ENCODE measurements at regions of chr21 and their contacts with region 1.

Region 1: DNA sequence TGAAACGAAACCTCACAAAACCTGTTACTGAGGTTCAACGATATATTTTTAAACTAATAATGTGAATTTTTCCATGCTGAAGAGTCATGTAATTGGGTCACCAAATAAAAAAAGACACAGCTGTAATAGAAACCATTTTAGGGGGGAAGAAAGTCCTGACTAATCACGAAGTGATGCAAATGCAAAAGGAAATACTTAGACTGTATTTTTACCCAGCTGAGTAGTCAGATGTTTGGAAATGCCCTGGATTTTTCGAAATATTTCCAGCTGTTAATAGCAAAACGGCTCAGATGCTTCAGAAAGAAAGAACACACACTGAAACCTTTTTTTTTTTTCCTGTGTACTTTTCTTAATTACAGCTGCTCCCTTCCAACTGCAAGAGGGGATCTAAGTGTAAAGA is 210.3 kb downstream of the SETD4 start:
- DNase-seq: no peak
- H3K4me3 Mint-ChIP-seq: no peak overlapping the region
- H3K27ac Mint-ChIP-seq: no peak overlapping the region
- H3K4me1 Mint-ChIP-seq: no peaks in the 10 kb centered on the region
- H3K27me3 Mint-ChIP-seq: peaks cover 45% of the 10 kb centered on the region
- CTCF ChIP-seq: no peak

Region 2: GRCh38 chr21:34967509-34968289 is 882.3 kb before region 1 on chr21:
- CTCF ChIA-PET with region 1: no interaction called
- intact Hi-C with region 1: loop called (anchors 5 kb)
- DNase-seq: peak; percentile 31
- H3K4me3 Mint-ChIP-seq: no peak overlapping the region
- H3K27ac Mint-ChIP-seq: peak overlapping the region; percentile 33
- H3K4me1 Mint-ChIP-seq: peaks cover 28% of the 10 kb centered on the region
- H3K27me3 Mint-ChIP-seq: no peaks in the 10 kb centered on the region
- CTCF ChIP-seq: no peak

Measured in Calu3 (cell line).